Naive thymus-derived CD4-positive, alpha-beta T cell (primary cell): ENCODE measurements at regions of chr13 and their contacts with region 1.

Region 1: GRCh38 chr13:22114630-22115311 is 443.9 kb downstream of the FGF9 start:
- DNase-seq: peak in 7 of 9 donors; percentile 46 to 85 (median 63)
- ATAC-seq: peak; percentile 93
- H3K4me3 ChIP-seq: no peak overlapping the region
- H3K4me3 Mint-ChIP-seq: peak overlapping the region in 9 of 10 donors; percentile 16 to 64 (median 37)
- H3K27ac ChIP-seq: no peak overlapping the region
- H3K27ac Mint-ChIP-seq: peak overlapping the region; percentile 20 to 89 (median 84)
- H3K4me1 ChIP-seq: peaks cover 7 to 19% of the 10 kb centered on the region in 2 donors
- H3K4me1 Mint-ChIP-seq: peaks cover 16 to 51% (median 37%) of the 10 kb centered on the region in 7 donors
- H3K27me3 ChIP-seq: no peaks in the 10 kb centered on the region
- H3K27me3 Mint-ChIP-seq: peaks cover 0 to 2% (median 0%) of the 10 kb centered on the region in 5 donors

Region 2: DNA sequence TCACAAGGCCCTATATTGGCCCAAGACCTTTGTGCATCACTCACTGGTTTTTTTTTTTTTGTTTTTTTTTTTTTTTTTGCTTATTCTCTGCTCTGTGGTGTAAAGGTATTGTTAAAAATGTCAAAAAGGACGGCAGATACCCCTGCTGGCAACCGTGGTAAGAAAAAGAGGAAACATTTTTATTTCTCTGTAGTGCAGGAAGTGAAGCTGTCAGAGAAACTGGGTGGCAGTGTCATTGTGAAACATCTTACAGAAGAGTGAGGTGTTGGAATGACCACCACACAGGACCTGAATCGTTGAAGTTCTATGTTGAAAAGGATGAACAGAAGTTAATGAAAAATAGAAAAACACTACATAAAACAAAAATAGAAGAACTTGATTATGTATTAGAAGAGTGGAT is 97.5 kb before region 1 on chr13:
- CTCF ChIA-PET with region 1: interaction called, 4 read pairs
- POLR2A ChIA-PET with region 1: no interaction called
- intact Hi-C with region 1: loop called in 1 of 2 experiments (anchors 5 kb)
- DNase-seq: peak in 2 of 9 donors; percentile 4 to 10
- ATAC-seq: peak; percentile 47
- H3K4me3 ChIP-seq: no peak overlapping the region
- H3K4me3 Mint-ChIP-seq: no peak overlapping the region
- H3K27ac ChIP-seq: no peak overlapping the region
- H3K27ac Mint-ChIP-seq: peak overlapping the region in 3 of 9 donors; percentile 1 to 46 (median 5)
- H3K4me1 ChIP-seq: no peaks in the 10 kb centered on the region
- H3K4me1 Mint-ChIP-seq: peaks cover 5 to 14% (median 10%) of the 10 kb centered on the region in 7 donors
- H3K27me3 ChIP-seq: no peaks in the 10 kb centered on the region
- H3K27me3 Mint-ChIP-seq: no peaks in the 10 kb centered on the region

Region 3: DNA sequence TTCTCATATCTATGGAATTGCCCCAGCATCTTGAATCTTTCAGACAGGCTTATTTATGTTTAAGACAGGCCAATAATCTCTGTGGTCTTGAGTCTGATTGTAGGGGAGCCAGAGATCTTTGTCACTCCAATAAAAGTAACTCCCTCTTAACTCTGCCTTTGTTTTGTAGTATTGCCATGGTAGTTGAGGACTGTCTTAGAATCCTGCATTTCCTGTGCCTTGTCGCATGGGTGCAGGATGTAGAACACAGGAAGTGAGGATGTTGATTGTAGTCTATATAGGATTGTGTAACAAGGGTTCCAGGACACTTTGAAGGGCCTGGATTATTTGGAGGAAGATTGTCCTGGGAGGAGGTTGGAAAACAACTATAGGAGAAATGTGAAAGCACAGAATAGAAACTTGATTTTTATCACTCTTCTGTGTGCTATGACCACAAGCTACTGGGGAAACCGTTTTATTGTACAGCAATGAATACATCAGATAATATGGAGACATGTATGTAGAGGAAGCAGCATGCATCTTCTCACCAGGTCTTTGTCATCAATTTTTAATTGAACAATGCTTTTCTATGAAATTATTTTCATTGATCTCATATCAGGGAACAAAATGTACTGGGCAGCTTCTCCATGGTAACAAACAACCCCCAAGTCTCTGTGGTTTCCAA is 32.2 kb before region 1 on chr13:
- CTCF ChIA-PET with region 1: no interaction called
- POLR2A ChIA-PET with region 1: no interaction called
- intact Hi-C with region 1: loop called (anchors 2 kb)
- DNase-seq: peak in 3 of 9 donors; percentile 24 to 47 (median 33)
- ATAC-seq: peak; percentile 57
- H3K4me3 ChIP-seq: no peak overlapping the region
- H3K4me3 Mint-ChIP-seq: peak overlapping the region in 6 of 10 donors; percentile 1 to 63 (median 4)
- H3K27ac ChIP-seq: no peak overlapping the region
- H3K27ac Mint-ChIP-seq: peak overlapping the region in 6 of 9 donors; percentile 4 to 59 (median 25)
- H3K4me1 ChIP-seq: peaks cover 4 to 11% of the 10 kb centered on the region in 2 donors
- H3K4me1 Mint-ChIP-seq: peaks cover 9 to 32% (median 27%) of the 10 kb centered on the region in 7 donors
- H3K27me3 ChIP-seq: no peaks in the 10 kb centered on the region
- H3K27me3 Mint-ChIP-seq: peaks cover 0 to 5% (median 0%) of the 10 kb centered on the region in 5 donors

Region 4: DNA sequence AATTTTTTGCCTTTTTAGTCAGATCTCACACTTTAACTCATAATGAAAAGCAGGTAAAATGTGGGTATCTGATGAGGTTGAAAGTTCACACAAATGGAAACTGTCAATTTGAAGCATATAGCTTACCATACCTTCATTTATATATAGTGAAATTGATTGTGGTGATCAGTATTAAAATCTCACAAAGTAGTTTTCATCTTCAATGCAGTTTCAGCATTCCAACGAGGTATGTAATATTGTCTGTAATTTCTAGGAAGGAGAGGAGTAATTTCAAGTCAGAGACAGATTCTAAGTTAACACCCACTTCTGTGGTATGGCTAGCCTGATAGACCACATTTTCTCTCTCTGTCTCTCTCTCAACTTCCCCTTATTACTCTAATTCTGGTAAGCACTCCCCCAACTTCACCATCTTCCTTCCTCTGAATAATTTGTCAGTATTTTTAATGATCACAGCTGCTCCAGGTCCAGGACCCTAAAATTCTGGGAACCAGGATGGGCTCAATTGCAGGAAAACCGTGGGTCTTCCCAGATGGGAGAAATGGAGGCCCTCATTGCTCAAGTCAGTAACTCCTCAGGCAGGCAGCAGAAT is 11.8 kb after region 1 on chr13:
- CTCF ChIA-PET with region 1: no interaction called
- POLR2A ChIA-PET with region 1: interaction called, 4 read pairs
- intact Hi-C with region 1: loop called in 1 of 2 experiments (anchors 1 kb)
- DNase-seq: no peak
- ATAC-seq: peak; percentile 57
- H3K4me3 ChIP-seq: no peak overlapping the region
- H3K4me3 Mint-ChIP-seq: peak overlapping the region in 1 of 10 donors; percentile 8
- H3K27ac ChIP-seq: no peak overlapping the region
- H3K27ac Mint-ChIP-seq: peak overlapping the region in 1 of 9 donors; percentile 24
- H3K4me1 ChIP-seq: peaks cover 0 to 6% of the 10 kb centered on the region in 2 donors
- H3K4me1 Mint-ChIP-seq: peaks cover 10 to 33% (median 13%) of the 10 kb centered on the region in 7 donors
- H3K27me3 ChIP-seq: no peaks in the 10 kb centered on the region
- H3K27me3 Mint-ChIP-seq: no peaks in the 10 kb centered on the region

Region 5: GRCh38 chr13:22161871-22162270 is 47.1 kb after region 1 on chr13:
- CTCF ChIA-PET with region 1: no interaction called
- POLR2A ChIA-PET with region 1: interaction called, 3 read pairs
- intact Hi-C with region 1: loop called (anchors 1 to 2 kb)
- DNase-seq: peak in 5 of 9 donors; percentile 8 to 56 (median 24)
- ATAC-seq: peak; percentile 64
- H3K4me3 ChIP-seq: peak overlapping the region; percentile 17
- H3K4me3 Mint-ChIP-seq: peak overlapping the region; percentile 4 to 87 (median 55)
- H3K27ac ChIP-seq: peak overlapping the region; percentile 23
- H3K27ac Mint-ChIP-seq: peak overlapping the region in 7 of 9 donors; percentile 1 to 81 (median 35)
- H3K4me1 ChIP-seq: peaks cover 8 to 11% of the 10 kb centered on the region in 2 donors
- H3K4me1 Mint-ChIP-seq: peaks cover 16 to 60% (median 34%) of the 10 kb centered on the region in 7 donors
- H3K27me3 ChIP-seq: no peaks in the 10 kb centered on the region
- H3K27me3 Mint-ChIP-seq: no peaks in the 10 kb centered on the region